ENCODE measurements at regions of chr4 and their contacts with region 1.

Region 1: DNA sequence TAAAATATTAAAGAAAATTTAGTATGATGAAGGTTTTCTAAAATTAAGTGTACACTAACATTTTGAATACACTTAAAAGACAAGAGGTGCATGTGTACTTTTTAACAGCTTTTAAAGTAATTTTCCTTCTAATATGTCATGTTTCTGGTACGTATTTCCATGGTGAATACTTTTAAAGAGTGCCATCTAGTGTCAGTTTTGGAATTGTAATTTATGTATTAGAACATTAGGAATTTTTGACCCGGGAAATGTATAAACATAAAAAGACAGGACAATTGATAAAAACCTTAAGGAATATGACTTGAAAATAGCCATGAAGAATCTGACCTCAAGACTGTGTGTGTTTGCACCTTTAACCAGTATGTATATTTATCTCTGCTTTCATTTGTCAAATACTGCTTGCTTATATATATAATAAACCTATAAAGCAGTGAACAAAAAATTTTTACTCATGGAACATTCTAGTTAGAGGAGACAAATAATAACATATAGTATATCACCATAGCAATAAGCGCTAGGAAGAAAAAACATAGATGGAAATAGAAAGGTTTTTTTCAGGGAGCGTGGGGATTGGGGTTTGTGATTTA is 7.2 kb downstream of the GSTCD start:
- DNase-seq: peak; percentile 74
- H3K4me3 ChIP-seq: no peak overlapping the region
- H3K27ac ChIP-seq: no peak overlapping the region
- H3K4me1 ChIP-seq: peaks cover 31% of the 10 kb centered on the region
- H3K27me3 ChIP-seq: no peaks in the 10 kb centered on the region
- CTCF ChIP-seq: peak; percentile 64

Region 2: DNA sequence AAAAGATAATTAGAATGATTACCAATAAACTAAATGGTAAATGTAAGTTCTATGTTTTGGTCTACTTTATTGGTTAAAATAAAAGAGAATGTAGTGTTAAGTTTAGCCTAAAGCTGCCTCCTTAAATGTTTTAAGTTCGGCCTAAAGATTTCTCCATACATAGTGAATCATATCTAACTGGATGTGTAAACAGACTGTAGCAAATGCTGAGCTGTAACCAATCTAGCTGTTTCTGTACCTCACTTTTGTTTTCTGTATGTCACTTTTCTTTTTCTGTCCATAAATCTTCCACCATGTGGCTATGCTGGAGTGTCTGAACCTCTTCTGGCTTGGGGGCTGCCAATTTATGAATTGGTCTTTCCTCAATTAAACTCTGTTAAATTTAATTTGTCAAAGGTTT is 479.0 kb after region 1 on chr4:
- CTCF ChIA-PET with region 1: no interaction called
- POLR2A ChIA-PET with region 1: no interaction called
- intact Hi-C with region 1: loop called (anchors 10 kb)
- DNase-seq: no peak
- H3K4me3 ChIP-seq: no peak overlapping the region
- H3K27ac ChIP-seq: no peak overlapping the region
- H3K4me1 ChIP-seq: no peaks in the 10 kb centered on the region
- H3K27me3 ChIP-seq: no peaks in the 10 kb centered on the region
- CTCF ChIP-seq: no peak

Measured in A673 (cell line).